Left lung (tissue), 14 donors: ENCODE measurements at regions of chr1 and their contacts with region 1.

Region 1: GRCh38 chr1:226642876-226643576 is 94.5 kb downstream of the STUM start:
- DNase-seq: peak in 2 of 4 donors; percentile 69 to 86
- ATAC-seq: peak; percentile 70
- H3K4me3 ChIP-seq: no peak overlapping the region
- H3K27ac ChIP-seq: peak overlapping the region in 1 of 2 donors; percentile 65
- H3K4me1 ChIP-seq: peaks cover 5 to 30% of the 10 kb centered on the region in 2 donors
- H3K27me3 ChIP-seq: no peaks in the 10 kb centered on the region
- CTCF ChIP-seq: no peak

Region 2: DNA sequence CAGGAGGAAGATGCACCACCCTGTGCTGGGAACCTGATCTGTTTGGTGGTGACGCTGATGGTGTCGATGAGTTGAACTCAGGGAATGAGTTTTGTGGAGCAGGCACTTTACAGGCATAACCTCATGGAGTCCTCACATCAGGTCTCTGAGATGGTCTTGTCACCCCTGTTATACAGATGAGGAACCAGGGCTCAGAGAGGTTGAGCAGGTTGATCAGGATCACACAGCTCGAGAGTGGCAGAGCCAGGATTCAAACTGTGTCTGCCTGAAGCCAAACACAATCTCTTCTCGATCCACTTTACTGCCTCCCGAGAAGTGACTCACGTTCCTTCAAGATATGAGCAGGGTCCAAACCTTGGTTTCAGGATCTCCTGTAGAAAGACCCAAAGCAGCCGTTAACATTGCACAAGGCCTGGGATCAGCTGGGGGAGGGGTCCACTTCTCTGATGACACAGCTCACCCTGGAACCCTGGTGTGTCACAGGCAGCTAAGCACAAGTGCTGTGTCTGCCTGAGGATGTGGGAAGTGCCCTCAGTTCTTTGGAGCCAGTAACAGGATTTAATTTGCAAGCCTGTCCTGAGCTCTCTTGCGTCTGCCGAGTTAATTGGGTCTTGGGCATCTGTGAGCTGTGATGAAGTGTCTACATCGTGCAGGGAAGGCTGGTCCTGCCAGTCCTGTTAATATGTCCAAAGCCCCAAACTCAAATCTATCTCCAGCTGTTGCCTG is 159.9 kb before region 1 on chr1:
- intact Hi-C with region 1: no loop called
- DNase-seq: no peak
- ATAC-seq: no peak
- H3K4me3 ChIP-seq: no peak overlapping the region
- H3K27ac ChIP-seq: no peak overlapping the region
- H3K4me1 ChIP-seq: no peaks in the 10 kb centered on the region
- H3K27me3 ChIP-seq: no peaks in the 10 kb centered on the region
- CTCF ChIP-seq: no peak

Region 3: DNA sequence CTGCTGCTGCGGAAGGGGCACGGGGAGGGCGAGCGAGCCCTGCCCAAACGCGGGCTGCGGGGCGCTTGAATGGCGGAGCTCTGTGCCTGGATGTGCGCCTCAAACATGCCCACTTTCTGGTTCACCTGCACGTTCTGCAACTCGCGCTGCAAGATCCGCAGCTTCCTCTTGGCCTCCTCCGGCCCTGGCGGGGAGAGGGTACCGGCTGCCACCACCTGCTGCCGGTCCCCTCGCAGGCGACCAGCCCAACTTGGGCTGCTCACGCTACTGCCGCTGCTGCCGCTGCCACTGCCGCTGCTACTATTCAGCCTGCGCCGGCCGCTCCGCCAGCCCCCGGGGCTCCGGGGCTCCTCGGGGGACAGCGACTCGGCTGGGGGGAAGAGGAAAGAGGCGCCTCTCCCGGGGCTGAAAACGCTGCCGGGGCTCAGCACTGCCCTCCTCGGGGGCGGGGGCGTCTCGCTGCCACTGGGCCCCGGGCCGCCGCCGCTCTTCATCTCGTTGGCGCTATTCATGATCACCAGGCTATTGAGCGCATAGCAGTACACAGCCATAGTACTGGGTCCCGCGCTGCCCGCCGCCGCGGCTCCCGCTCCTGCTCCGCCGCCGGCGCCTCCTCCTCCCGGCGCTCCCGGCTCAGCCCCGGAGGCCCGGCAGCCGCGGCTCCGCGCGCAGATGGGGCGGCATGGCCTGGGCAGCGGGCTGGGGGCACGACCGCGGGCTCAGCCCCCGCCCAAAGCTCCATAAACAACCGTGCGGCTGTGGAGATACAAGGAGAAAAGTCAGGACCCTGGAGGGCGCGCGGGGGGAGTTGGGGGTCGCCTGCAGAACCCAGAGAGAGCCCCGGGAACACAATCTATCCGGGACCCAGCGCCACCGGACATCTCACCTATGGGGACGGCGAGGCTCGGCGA is 94.1 kb after region 1 on chr1:
- intact Hi-C with region 1: loop called in 1 of 2 experiments (anchors 10 kb)
- DNase-seq: peak; percentile 34 to 88 (median 53)
- ATAC-seq: peak; percentile 37
- H3K4me3 ChIP-seq: peak overlapping the region; percentile 68 to 90
- H3K27ac ChIP-seq: peak overlapping the region; percentile 85 to 90
- H3K4me1 ChIP-seq: peaks cover 29 to 61% of the 10 kb centered on the region in 2 donors
- H3K27me3 ChIP-seq: no peaks in the 10 kb centered on the region
- CTCF ChIP-seq: no peak